Activated CD4-positive, alpha-beta T cell treated with anti-CD3 and anti-CD28 coated beads for 36 hours (primary cell): ENCODE measurements at regions of chr10 and their contacts with region 1.

Region 1: GRCh38 chr10:70925377-70926225 is 37.2 kb upstream of the PCBD1 start:
- DNase-seq: peak; percentile 75
- ATAC-seq: peak; percentile 80
- H3K4me3 Mint-ChIP-seq: no peak overlapping the region
- H3K27ac Mint-ChIP-seq: no peak overlapping the region
- H3K4me1 Mint-ChIP-seq: no peaks in the 10 kb centered on the region
- H3K27me3 Mint-ChIP-seq: peaks cover 7% of the 10 kb centered on the region

Region 2: GRCh38 chr10:70943841-70944466 is 18.4 kb after region 1 on chr10:
- CTCF ChIA-PET with region 1: interaction called, 13 read pairs
- POLR2A ChIA-PET with region 1: no interaction called
- intact Hi-C with region 1: no loop called
- DNase-seq: no peak
- ATAC-seq: no peak
- H3K4me3 Mint-ChIP-seq: no peak overlapping the region
- H3K27ac Mint-ChIP-seq: no peak overlapping the region
- H3K4me1 Mint-ChIP-seq: no peaks in the 10 kb centered on the region
- H3K27me3 Mint-ChIP-seq: no peaks in the 10 kb centered on the region

Region 3: DNA sequence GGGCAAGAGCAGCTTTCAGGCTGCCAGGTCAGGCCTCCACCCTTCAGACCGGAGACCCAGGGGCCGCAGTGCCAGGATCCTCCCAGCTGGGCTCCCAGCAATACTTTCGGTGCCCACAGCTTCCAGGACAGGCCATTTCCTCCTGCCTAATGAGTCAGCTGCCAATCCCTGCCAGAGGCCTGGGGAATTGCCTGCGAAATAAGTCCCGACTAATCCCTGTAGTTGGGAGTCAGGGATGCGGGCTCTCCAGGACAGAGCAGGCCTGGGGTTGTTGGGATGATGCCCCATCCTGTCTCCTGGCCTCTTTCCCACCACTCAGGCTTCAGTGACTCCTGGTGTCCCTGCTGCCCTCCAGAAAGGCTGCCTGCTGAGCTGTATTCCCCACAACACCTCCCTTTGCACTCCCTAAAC is 143.3 kb after region 1 on chr10:
- CTCF ChIA-PET with region 1: interaction called, 6 read pairs
- POLR2A ChIA-PET with region 1: no interaction called
- intact Hi-C with region 1: loop called in 1 of 2 experiments (anchors 10 kb)
- DNase-seq: no peak
- ATAC-seq: no peak
- H3K4me3 Mint-ChIP-seq: no peak overlapping the region
- H3K27ac Mint-ChIP-seq: no peak overlapping the region
- H3K4me1 Mint-ChIP-seq: no peaks in the 10 kb centered on the region
- H3K27me3 Mint-ChIP-seq: no peaks in the 10 kb centered on the region

Region 4: DNA sequence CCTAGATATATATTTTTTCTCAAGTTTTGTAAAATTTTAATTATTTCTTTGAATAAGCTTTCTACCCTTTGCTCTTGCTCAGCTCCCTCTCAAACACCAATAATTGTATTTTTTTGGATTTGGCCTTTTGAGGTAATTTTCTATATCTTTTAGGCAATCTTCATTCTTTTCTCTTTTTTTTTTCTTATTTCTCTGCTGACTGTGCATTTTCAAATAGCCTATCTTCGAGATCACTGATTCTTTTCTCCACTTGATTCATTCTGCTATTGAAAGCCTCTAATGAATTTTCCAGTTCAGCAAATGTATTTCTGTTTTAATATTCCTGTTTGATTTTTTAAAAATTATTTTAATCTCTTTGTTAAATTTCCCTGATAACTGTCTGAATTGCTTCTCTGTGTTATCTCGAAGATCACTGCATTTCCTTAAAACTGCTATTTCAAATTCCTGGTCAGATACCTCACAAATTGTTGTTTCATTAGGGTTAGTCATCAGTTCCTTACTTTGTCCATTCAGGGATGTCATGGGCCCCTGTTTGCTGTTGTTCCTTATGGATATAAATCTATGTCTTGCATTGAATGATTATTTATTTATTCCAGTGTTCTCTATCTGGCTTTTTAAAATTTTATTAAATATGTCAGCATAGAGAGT is 186.7 kb after region 1 on chr10:
- CTCF ChIA-PET with region 1: no interaction called
- POLR2A ChIA-PET with region 1: no interaction called
- intact Hi-C with region 1: no loop called
- DNase-seq: no peak
- ATAC-seq: no peak
- H3K4me3 Mint-ChIP-seq: no peak overlapping the region
- H3K27ac Mint-ChIP-seq: no peak overlapping the region
- H3K4me1 Mint-ChIP-seq: no peaks in the 10 kb centered on the region
- H3K27me3 Mint-ChIP-seq: peaks cover 26% of the 10 kb centered on the region

Region 5: GRCh38 chr10:71212318-71213126 is 286.9 kb after region 1 on chr10 and contains the start of gene UNC5B:
- CTCF ChIA-PET with region 1: interaction called, 4 read pairs
- POLR2A ChIA-PET with region 1: no interaction called
- intact Hi-C with region 1: loop called (anchors 1 to 2 kb)
- DNase-seq: peak; percentile 78
- ATAC-seq: peak; percentile 91
- H3K4me3 Mint-ChIP-seq: peak within 1 kb of the TSS; percentile 39
- H3K27ac Mint-ChIP-seq: no peak within 1 kb of the TSS
- H3K4me1 Mint-ChIP-seq: peaks cover 8% of the 10 kb centered on the region
- H3K27me3 Mint-ChIP-seq: peaks cover 55% of the 10 kb centered on the region
- total RNA-seq, gene UNC5B: 0.05 to 0.09 TPM

Region 6: DNA sequence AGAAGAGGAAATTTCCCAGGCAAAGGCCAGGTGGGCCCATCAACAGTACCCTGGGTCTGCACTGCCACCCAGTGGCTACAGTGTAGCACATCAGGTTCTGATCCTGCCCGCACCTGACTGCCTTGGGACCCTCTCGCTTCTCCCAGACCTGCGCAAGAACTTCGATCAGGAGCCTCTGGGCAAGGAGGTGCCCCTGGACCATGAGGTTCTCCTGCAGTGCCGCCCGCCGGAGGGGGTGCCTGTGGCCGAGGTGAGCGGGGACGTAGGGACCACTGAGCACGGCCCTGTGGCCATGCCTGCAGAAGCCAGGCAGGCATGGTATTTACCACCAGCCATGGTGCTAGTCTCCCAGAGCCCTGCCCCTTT is 359.6 kb after region 1 on chr10:
- CTCF ChIA-PET with region 1: interaction called, 5 read pairs
- POLR2A ChIA-PET with region 1: no interaction called
- intact Hi-C with region 1: loop called (anchors 1 to 5 kb)
- DNase-seq: peak; percentile 60
- ATAC-seq: peak; percentile 74
- H3K4me3 Mint-ChIP-seq: no peak overlapping the region
- H3K27ac Mint-ChIP-seq: no peak overlapping the region
- H3K4me1 Mint-ChIP-seq: no peaks in the 10 kb centered on the region
- H3K27me3 Mint-ChIP-seq: no peaks in the 10 kb centered on the region